Activated naive CD4-positive, alpha-beta T cell treated with anti-CD3 and anti-CD28 coated beads for 36 hours (primary cell): ENCODE measurements at regions of chr17 and their contacts with region 1.

Region 1: DNA sequence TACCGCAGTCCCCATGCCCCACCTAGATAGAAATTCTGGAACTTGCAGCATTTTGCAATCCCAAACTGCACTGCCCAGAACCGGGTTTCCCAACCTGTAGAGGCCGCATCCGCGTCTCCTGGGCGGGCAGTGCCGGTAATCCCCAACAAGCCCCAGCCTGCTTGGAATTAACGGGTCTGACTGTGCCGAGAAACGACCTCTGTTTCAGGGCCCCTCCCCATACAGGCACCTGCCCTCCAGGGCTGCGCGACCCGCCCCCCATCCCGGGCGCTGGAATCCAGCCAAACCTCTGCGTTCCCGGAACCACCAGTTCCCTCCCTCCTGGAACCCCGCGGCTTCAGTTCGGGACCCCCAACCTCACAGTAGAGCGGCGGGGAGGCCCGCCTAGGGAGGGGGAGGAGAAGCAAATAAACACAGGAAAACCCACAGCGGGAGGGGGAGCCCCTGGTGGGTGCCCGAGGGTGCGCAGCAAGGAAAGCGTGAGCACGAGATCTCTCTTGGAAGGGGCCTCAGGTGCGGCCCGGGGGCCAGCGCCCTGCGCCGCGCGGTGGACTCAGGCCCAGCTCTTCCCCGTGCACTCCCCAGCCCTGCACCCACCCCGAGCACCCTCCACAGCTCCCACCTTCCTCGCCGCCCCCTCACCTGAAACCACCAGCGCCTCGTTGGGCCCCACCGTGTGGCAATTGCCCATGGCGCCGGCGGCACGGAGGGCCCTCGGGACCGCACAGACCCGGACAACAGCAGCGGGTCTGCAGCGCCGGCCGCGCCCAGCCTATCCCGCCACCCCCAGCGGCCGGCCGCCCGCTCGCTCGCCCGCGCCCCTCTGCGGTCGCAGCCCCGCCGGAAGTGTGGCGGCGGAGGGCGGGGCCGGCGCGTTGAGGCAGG is at the start of gene FLOT2:
- DNase-seq: peak; percentile 88
- H3K4me3 Mint-ChIP-seq: peak within 1 kb of the TSS; percentile 94
- H3K27ac Mint-ChIP-seq: peak within 1 kb of the TSS; percentile 93
- H3K4me1 Mint-ChIP-seq: peaks cover 72% of the 10 kb centered on the region
- H3K27me3 Mint-ChIP-seq: no peaks in the 10 kb centered on the region
- total RNA-seq, gene FLOT2: 66.0 to 71.5 TPM

Region 2: GRCh38 chr17:28756025-28756804 is 140.9 kb before region 1 on chr17:
- CTCF ChIA-PET with region 1: no interaction called
- intact Hi-C with region 1: no loop called
- DNase-seq: no peak
- H3K4me3 Mint-ChIP-seq: no peak overlapping the region
- H3K27ac Mint-ChIP-seq: peak overlapping the region; percentile 54
- H3K4me1 Mint-ChIP-seq: no peaks in the 10 kb centered on the region
- H3K27me3 Mint-ChIP-seq: no peaks in the 10 kb centered on the region

Region 3: GRCh38 chr17:28842282-28843012 is 54.7 kb before region 1 on chr17 and contains the start of gene FAM222B:
- CTCF ChIA-PET with region 1: interaction called, 4 read pairs
- intact Hi-C with region 1: loop called (anchors 1 kb)
- DNase-seq: peak; percentile 88
- H3K4me3 Mint-ChIP-seq: peak within 1 kb of the TSS; percentile 99
- H3K27ac Mint-ChIP-seq: peak within 1 kb of the TSS; percentile 95
- H3K4me1 Mint-ChIP-seq: peaks cover 31% of the 10 kb centered on the region
- H3K27me3 Mint-ChIP-seq: no peaks in the 10 kb centered on the region
- total RNA-seq, gene FAM222B: 11.2 TPM

Region 4: DNA sequence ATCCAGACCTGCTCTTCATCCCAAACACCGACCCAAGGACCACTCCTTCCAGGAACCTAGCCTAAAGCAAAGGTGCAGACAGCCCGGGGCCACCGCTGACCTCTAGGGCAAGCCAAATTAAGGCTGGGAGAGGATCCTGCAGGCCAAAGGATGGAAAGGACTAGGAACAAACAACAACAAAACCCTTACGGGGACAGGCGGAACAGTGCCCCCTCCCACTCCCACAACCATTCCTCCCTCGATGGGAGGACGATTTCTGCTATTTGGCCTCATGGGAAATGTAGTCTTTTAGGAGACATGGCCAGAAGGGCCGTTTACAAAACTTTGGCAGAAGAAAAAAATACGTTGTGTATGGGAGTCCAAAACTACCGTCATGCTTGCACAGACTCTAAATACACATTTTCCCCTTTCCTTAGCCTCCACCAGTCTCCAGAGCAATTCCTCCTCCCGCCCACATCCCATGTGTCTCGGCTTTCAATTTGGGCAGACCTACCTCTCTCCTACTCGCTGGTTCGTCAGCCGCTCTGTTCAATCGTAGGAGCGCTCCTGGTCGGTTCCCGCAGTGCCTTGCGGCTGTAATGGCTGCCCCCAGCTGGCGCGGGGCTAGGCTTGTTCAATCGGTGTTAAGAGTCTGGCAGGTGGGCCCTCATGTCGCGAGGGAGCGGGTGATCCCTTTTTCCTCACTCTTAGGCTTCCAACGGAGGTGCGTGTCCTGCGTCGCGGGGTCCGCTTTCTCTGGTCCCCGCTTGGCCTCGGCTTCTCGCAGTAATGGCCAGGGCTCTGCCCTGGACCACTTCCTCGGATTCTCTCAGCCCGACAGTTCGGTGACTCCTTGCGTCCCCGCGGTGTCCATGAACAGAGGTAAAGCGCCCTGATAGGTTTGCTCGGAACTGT is 42.4 kb before region 1 on chr17 and contains the start of gene ERAL1:
- CTCF ChIA-PET with region 1: interaction called, 22 read pairs
- intact Hi-C with region 1: loop called (anchors 1 kb)
- DNase-seq: peak; percentile 93
- H3K4me3 Mint-ChIP-seq: peak within 1 kb of the TSS; percentile 79
- H3K27ac Mint-ChIP-seq: peak within 1 kb of the TSS; percentile 87
- H3K4me1 Mint-ChIP-seq: peaks cover 25% of the 10 kb centered on the region
- H3K27me3 Mint-ChIP-seq: no peaks in the 10 kb centered on the region
- total RNA-seq, gene ERAL1: 51.2 to 60.4 TPM

Region 5: GRCh38 chr17:28916302-28916934 is 19.3 kb after region 1 on chr17:
- CTCF ChIA-PET with region 1: interaction called, 4 read pairs
- intact Hi-C with region 1: loop called (anchors 2 kb)
- DNase-seq: peak; percentile 62
- H3K4me3 Mint-ChIP-seq: no peak overlapping the region
- H3K27ac Mint-ChIP-seq: peak overlapping the region; percentile 34
- H3K4me1 Mint-ChIP-seq: peaks cover 13% of the 10 kb centered on the region
- H3K27me3 Mint-ChIP-seq: no peaks in the 10 kb centered on the region

Region 6: DNA sequence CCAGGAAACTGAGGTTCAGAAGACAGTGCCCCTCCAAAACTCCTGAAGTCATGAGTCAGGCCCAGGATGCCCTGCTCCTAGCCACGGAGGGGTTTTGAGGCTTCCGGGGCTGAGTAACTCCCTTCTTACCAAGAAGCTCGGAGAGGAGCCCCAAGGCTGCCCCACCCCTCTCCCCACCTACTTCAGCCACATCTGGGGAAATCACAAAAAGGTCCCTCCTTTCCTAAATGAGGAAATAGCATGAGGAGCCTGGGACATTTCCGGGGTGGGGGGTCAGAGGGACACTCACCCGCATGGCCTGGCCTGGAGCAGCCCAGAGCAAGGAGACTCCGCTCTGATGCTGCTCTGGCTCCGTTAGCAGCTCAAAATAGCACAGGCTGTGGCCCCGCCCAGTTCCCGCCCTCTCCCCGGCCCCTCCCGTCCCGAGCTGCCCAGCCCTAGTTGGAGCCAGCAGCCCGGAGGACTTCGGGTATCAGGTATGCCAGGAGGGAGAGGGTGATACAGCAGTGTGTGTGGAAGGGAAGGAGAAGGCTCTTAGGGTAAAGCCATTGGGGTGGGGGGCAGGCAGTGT is 243.0 kb after region 1 on chr17:
- CTCF ChIA-PET with region 1: no interaction called
- intact Hi-C with region 1: loop called (anchors 10 kb)
- DNase-seq: peak; percentile 89
- H3K4me3 Mint-ChIP-seq: peak overlapping the region; percentile 83
- H3K27ac Mint-ChIP-seq: peak overlapping the region; percentile 93
- H3K4me1 Mint-ChIP-seq: peaks cover 66% of the 10 kb centered on the region
- H3K27me3 Mint-ChIP-seq: no peaks in the 10 kb centered on the region